ENCODE measurements at regions of chr1 and their contacts with region 1.

Region 1: GRCh38 chr1:28409090-28409489 is 39.5 kb downstream of the PHACTR4 start:
- DNase-seq: no peak
- H3K4me3 ChIP-seq: no peak overlapping the region
- H3K27ac ChIP-seq: 0 out of 4 replicates have a peak overlapping the region, but pooled peaks of 1 of the 2 experiments have one; percentile 10
- H3K4me1 ChIP-seq: peaks cover 0 to 2% of the 10 kb centered on the region in 2 experiments; a peak in 1 of 4 replicates
- H3K27me3 ChIP-seq: no peaks in the 10 kb centered on the region
- CTCF ChIP-seq: no peak
- EP300 ChIP-seq: no peak
- RAD21 ChIP-seq: no peak

Region 2: DNA sequence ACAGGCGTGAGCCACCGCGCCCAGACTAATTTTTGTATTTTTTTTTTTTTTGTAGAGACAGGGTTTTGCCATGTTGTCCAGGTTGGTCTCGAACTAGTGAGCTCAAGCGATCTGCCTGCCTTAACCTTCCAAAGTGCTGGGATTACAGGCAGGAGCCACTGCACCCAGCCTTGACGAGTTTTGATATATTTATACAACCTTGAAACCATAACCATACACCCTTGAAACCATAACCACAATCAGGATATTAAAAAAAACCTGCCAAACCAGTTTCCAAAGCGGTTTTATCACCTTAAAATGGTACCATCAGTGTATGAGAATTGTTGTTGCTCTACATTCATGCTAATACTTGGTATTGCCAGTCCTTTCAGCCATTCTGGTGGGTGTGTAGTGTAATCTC is 43.2 kb before region 1 on chr1:
- CTCF ChIA-PET with region 1: no interaction called
- POLR2A ChIA-PET with region 1: no interaction called
- DNase-seq: no peak
- H3K4me3 ChIP-seq: no peak overlapping the region
- H3K27ac ChIP-seq: no peak overlapping the region
- H3K4me1 ChIP-seq: peaks cover 0 to 4% of the 10 kb centered on the region in 2 experiments; a peak in 1 of 4 replicates
- H3K27me3 ChIP-seq: no peaks in the 10 kb centered on the region
- CTCF ChIP-seq: no peak
- EP300 ChIP-seq: no peak
- RAD21 ChIP-seq: no peak

Region 3: DNA sequence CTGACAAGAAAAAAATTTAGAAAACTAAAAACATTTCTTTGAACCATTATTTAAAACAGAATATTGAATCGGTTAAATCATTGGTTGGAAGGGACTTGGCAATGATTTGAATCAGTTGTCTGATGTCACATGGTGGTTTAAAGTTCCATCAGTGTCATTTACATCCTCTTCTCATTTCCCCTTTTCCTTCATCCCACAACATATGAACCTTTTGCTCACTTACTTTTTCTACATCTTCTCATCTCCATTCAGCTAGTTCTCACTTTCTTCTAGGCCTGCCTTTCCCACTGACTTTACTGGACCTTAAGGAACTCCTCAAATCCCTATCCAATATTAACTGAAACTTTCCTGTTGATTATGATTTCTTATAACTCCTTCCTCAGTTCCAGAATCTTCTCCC is 18.9 kb after region 1 on chr1:
- CTCF ChIA-PET with region 1: interaction called, 10 read pairs
- POLR2A ChIA-PET with region 1: no interaction called
- DNase-seq: no peak
- H3K4me3 ChIP-seq: no peak overlapping the region
- H3K27ac ChIP-seq: no peak overlapping the region
- H3K4me1 ChIP-seq: 0 out of 4 replicates have a peak, but pooled peaks cover 0 to under 1% of the 10 kb centered on the region in 2 experiments
- H3K27me3 ChIP-seq: no peaks in the 10 kb centered on the region
- CTCF ChIP-seq: no peak
- EP300 ChIP-seq: no peak
- RAD21 ChIP-seq: no peak

Region 4: DNA sequence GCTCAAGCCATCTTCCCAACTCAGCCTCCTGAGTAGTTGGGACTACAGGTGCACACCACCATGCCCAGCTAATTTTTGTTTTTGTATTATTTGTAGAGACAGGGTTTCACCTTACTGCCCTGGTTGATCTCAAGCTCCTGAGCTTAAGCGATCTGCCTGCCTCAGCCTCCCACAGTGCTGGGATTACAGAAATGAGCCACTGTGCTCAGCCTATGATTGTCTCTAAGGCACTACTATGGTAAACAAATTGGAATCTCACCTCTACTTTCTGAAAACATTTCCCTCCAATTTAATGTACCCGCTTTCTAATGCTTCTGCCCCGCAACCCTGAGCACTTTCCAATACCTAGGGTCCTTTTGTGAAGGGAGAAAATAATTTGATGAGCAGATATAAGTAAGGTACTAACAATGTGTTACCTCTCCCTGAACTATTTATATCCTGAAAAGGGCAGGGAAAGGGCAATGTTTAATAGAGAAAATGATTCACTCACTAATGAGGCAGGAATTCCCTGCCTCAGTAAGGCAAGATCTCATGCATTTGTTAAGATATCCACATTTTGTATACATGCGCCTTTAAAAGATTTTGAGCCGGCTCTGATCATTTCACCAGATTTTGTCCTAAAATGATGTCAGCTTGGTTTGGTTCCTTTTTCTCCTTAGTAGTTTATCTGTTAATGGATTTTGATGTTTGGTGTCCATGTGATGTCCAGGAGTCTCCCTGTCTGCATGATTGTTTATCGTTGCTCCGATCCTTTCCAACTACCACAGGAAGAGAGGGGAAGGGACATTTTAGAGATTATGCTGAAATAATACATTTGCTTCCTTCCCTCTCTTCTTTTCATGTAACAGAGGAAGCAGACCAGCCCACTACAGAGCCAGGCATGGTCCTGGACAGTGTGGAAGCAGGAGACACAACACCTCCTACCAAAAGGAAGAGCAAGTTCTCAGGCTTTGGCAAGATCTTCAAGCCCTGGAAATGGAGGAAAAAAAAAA is 49.4 kb after region 1 on chr1:
- CTCF ChIA-PET with region 1: no interaction called
- POLR2A ChIA-PET with region 1: no interaction called
- DNase-seq: peak; percentile 35
- H3K4me3 ChIP-seq: 0 out of 4 replicates have a peak overlapping the region, but pooled peaks of 1 of the 2 experiments have one; percentile 20
- H3K27ac ChIP-seq: peak overlapping the region; percentile 20 to 52; a peak in 3 of 4 replicates
- H3K4me1 ChIP-seq: peaks cover 3 to 24% of the 10 kb centered on the region in 2 experiments
- H3K27me3 ChIP-seq: no peaks in the 10 kb centered on the region
- CTCF ChIP-seq: no peak
- EP300 ChIP-seq: no peak
- RAD21 ChIP-seq: no peak

Region 5: DNA sequence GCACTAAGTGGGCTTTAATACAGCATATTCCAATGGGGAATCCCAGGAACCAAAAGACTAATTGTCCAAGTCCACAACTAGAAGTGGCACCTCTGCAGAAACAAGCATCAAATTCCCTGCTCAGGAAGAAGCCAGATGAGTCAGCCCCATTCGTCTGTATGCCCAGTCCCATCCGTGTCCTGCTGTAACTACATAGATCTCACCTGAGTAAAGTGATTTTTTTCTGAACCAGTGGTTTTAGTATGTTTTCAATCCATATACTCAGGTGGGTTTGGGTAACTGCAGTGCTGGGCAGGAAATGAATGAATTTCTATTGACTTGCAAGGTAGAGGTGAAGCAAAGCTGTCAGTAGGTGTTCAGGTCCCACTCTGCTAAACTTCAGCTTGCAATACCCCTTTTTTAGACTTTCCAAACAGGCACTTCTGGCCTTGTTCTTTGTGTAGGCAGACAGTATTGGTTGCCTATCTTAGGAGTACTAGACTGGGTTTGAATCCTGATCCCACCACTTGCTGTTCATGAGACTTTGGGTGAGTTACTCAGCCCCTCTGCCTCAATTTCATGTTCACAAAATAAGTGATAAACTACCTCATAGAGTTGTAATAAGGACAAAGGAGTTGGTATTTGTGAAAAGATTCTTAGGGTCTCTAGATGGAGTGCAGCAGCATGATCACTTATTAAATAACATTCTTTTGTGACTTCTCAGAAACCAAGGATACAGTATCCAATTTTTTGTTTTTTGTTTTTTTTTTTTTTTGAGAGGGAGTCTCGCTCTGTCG is 101.8 kb after region 1 on chr1:
- CTCF ChIA-PET with region 1: interaction called, 11 read pairs
- POLR2A ChIA-PET with region 1: interaction called, 3 read pairs
- DNase-seq: no peak
- H3K4me3 ChIP-seq: peak overlapping the region in 1 of 2 experiments; percentile 26; a peak in 1 of 4 replicates
- H3K27ac ChIP-seq: peak overlapping the region; percentile 34 to 75
- H3K4me1 ChIP-seq: peaks cover 18 to 20% of the 10 kb centered on the region in 2 experiments; a peak in 3 of 4 replicates
- H3K27me3 ChIP-seq: no peaks in the 10 kb centered on the region
- CTCF ChIP-seq: no peak
- EP300 ChIP-seq: no peak
- RAD21 ChIP-seq: no peak